H1 (cell line): ENCODE measurements at regions of chr3 and their contacts with region 1.

Region 1: GRCh38 chr3:185764163-185764979 is 60.5 kb downstream of the IGF2BP2 start:
- DNase-seq: no peak
- H3K4me3 ChIP-seq: no peak overlapping the region
- H3K27ac ChIP-seq: no peak overlapping the region
- H3K4me1 ChIP-seq: peaks cover 0 to 18% (median 8%) of the 10 kb centered on the region in 4 experiments; a peak in 6 of 7 replicates
- H3K27me3 ChIP-seq: no peaks in the 10 kb centered on the region
- CTCF ChIP-seq: no peak
- EP300 ChIP-seq: no peak
- POLR2A ChIP-seq: no peak
- RAD21 ChIP-seq: no peak

Region 2: DNA sequence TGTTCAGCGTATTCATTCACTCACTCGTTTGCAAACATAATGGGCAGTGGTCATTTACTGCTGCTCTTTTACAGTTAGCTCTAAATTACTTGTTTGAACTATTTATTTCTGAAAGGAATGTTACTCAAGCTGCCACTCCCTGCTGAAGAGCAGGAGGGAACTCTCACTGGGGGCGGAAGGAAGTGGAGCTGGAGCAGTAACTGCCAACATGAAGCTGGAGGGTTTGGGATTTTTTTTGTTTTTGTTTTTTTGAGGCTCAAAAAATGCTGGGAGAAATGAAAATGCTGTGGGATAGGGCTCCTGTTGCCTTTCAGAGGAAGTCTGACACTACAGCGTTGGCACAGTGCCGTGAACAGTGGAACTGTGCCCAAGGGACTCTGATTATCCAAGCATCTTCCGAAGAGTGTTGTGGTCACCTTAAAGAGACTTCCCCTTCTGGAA is 134.2 kb before region 1 on chr3:
- CTCF ChIA-PET with region 1: no interaction called
- POLR2A ChIA-PET with region 1: no interaction called
- DNase-seq: no peak
- H3K4me3 ChIP-seq: no peak overlapping the region
- H3K27ac ChIP-seq: no peak overlapping the region
- H3K4me1 ChIP-seq: no peaks in the 10 kb centered on the region
- H3K27me3 ChIP-seq: no peaks in the 10 kb centered on the region; a peak in 1 of 7 replicates
- CTCF ChIP-seq: no peak
- EP300 ChIP-seq: no peak
- POLR2A ChIP-seq: no peak
- RAD21 ChIP-seq: no peak

Region 3: DNA sequence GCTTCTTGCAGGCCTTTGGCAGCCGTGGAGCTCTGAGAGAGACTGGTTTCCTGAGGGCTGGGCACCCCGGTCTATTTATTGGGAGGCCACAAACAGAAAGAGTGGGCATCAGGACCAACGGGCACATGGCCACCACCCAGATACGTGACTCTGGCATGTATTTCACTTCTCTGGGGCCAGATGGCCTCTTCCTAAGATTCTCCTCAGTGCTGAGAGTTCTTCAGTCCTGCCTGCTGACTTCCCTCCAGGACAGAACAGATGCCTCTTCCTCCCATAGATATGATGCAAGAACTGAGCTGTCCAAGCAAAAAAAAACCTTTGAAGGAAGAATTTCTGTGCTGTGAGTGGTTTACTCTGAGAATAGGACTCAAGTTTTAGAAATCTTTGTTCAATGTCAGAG is 47.2 kb before region 1 on chr3:
- CTCF ChIA-PET with region 1: interaction called, 13 read pairs
- POLR2A ChIA-PET with region 1: interaction called, 4 read pairs
- DNase-seq: no peak
- H3K4me3 ChIP-seq: no peak overlapping the region
- H3K27ac ChIP-seq: no peak overlapping the region
- H3K4me1 ChIP-seq: peaks cover 12 to 33% (median 19%) of the 10 kb centered on the region in 4 experiments
- H3K27me3 ChIP-seq: no peaks in the 10 kb centered on the region
- CTCF ChIP-seq: no peak
- EP300 ChIP-seq: no peak
- POLR2A ChIP-seq: no peak
- RAD21 ChIP-seq: no peak

Region 4: GRCh38 chr3:185781759-185782158 is 17.4 kb after region 1 on chr3:
- CTCF ChIA-PET with region 1: interaction called, 40 read pairs
- POLR2A ChIA-PET with region 1: interaction called, 3 read pairs
- DNase-seq: no peak
- H3K4me3 ChIP-seq: no peak overlapping the region
- H3K27ac ChIP-seq: no peak overlapping the region
- H3K4me1 ChIP-seq: peaks cover 7 to 40% (median 26%) of the 10 kb centered on the region in 4 experiments; a peak in 6 of 7 replicates
- H3K27me3 ChIP-seq: no peaks in the 10 kb centered on the region
- CTCF ChIP-seq: no peak
- EP300 ChIP-seq: no peak
- POLR2A ChIP-seq: no peak
- RAD21 ChIP-seq: no peak